ENCODE measurements at regions of chr21 and their contacts with region 1.

Region 1: DNA sequence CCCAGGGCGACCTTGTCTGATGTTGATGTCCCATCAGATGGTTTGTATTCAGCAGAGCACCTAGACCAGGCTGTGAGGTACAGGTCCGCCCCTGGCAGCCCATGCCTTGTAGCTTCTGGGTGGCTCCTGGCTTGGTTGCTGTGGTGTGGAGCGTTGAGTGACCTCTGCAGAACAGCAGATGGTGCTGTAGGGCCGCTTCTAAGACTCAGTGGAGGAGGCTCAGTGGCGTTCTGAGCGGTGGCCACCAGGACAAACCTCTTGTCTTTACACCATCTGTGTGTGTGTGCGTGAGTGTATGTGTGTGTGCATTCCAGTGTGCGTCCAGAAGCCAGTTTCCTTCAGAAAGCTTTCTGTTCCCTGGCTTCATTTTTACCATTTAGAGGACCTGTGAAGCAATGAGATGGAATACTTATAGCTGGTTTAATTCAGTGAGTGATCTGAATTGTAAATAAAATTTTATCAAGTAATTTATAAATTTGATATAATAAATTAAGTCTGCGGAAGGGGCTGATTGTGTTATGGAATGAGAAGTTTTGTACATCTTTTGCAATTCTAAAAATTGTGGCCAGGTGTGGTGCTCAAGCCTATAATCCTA is 66.1 kb downstream of the ADARB1 start:
- DNase-seq: peak; percentile 95
- ATAC-seq: peak; percentile 83
- H3K4me3 ChIP-seq: no peak overlapping the region
- H3K27ac ChIP-seq: no peak overlapping the region
- H3K4me1 ChIP-seq: peaks cover 36% of the 10 kb centered on the region
- H3K27me3 ChIP-seq: no peaks in the 10 kb centered on the region
- CTCF ChIP-seq: peak; percentile 97
- POLR2A ChIP-seq: 0 out of 2 replicates have a peak, but pooled peaks have one; percentile 28
- RAD21 ChIP-seq: peak; percentile 90

Region 2: GRCh38 chr21:44801468-44802395 is 338.7 kb before region 1 on chr21 and contains the start of gene UBE2G2:
- CTCF ChIA-PET with region 1: no interaction called
- POLR2A ChIA-PET with region 1: no interaction called
- dilution Hi-C with region 1: no loop called
- in situ Hi-C with region 1: no loop called
- intact Hi-C with region 1: loop called (anchors 10 kb)
- DNase-seq: peak; percentile 65
- ATAC-seq: peak; percentile 91
- H3K4me3 ChIP-seq: peak within 1 kb of the TSS; percentile 100
- H3K27ac ChIP-seq: peak within 1 kb of the TSS; percentile 98
- H3K4me1 ChIP-seq: peaks cover 2% of the 10 kb centered on the region; the same call in 1 of the 2 replicates
- H3K27me3 ChIP-seq: no peaks in the 10 kb centered on the region
- CTCF ChIP-seq: no peak
- POLR2A ChIP-seq: peak; percentile 39; the same call in 1 of the 2 replicates
- RAD21 ChIP-seq: no peak
- total RNA-seq, gene UBE2G2: 65.4 and 75.8 TPM in 2 replicates

Region 3: GRCh38 chr21:44892536-44893277 is 247.7 kb before region 1 on chr21:
- CTCF ChIA-PET with region 1: no interaction called
- POLR2A ChIA-PET with region 1: no interaction called
- dilution Hi-C with region 1: no loop called
- in situ Hi-C with region 1: no loop called
- intact Hi-C with region 1: loop called (anchors 5 kb)
- DNase-seq: peak; percentile 19
- ATAC-seq: peak; percentile 85
- H3K4me3 ChIP-seq: no peak overlapping the region
- H3K27ac ChIP-seq: no peak overlapping the region
- H3K4me1 ChIP-seq: no peaks in the 10 kb centered on the region
- H3K27me3 ChIP-seq: peaks cover 69% of the 10 kb centered on the region
- CTCF ChIP-seq: peak; percentile 73
- POLR2A ChIP-seq: no peak
- RAD21 ChIP-seq: peak; percentile 56

Region 4: GRCh38 chr21:44962403-44962966 is 178.0 kb before region 1 on chr21:
- CTCF ChIA-PET with region 1: interaction called, 8 read pairs
- POLR2A ChIA-PET with region 1: no interaction called
- dilution Hi-C with region 1: no loop called
- in situ Hi-C with region 1: no loop called
- intact Hi-C with region 1: loop called (anchors 5 kb)
- DNase-seq: peak; percentile 100
- ATAC-seq: peak; percentile 91
- H3K4me3 ChIP-seq: no peak overlapping the region
- H3K27ac ChIP-seq: peak overlapping the region; percentile 81
- H3K4me1 ChIP-seq: peaks cover 24% of the 10 kb centered on the region
- H3K27me3 ChIP-seq: no peaks in the 10 kb centered on the region
- CTCF ChIP-seq: no peak
- POLR2A ChIP-seq: peak; percentile 65
- RAD21 ChIP-seq: no peak; the same call in 1 of the 2 replicates

Region 5: GRCh38 chr21:45228171-45228641 is 87.8 kb after region 1 on chr21:
- CTCF ChIA-PET with region 1: interaction called, 5 read pairs
- POLR2A ChIA-PET with region 1: no interaction called
- dilution Hi-C with region 1: no loop called
- in situ Hi-C with region 1: no loop called
- intact Hi-C with region 1: loop called (anchors 5 kb)
- DNase-seq: peak; percentile 99
- ATAC-seq: peak; percentile 88
- H3K4me3 ChIP-seq: no peak overlapping the region
- H3K27ac ChIP-seq: 0 out of 2 replicates have a peak overlapping the region, but pooled peaks have one; percentile 2
- H3K4me1 ChIP-seq: peaks cover 23% of the 10 kb centered on the region
- H3K27me3 ChIP-seq: no peaks in the 10 kb centered on the region
- CTCF ChIP-seq: no peak
- POLR2A ChIP-seq: no peak
- RAD21 ChIP-seq: no peak

Region 6: DNA sequence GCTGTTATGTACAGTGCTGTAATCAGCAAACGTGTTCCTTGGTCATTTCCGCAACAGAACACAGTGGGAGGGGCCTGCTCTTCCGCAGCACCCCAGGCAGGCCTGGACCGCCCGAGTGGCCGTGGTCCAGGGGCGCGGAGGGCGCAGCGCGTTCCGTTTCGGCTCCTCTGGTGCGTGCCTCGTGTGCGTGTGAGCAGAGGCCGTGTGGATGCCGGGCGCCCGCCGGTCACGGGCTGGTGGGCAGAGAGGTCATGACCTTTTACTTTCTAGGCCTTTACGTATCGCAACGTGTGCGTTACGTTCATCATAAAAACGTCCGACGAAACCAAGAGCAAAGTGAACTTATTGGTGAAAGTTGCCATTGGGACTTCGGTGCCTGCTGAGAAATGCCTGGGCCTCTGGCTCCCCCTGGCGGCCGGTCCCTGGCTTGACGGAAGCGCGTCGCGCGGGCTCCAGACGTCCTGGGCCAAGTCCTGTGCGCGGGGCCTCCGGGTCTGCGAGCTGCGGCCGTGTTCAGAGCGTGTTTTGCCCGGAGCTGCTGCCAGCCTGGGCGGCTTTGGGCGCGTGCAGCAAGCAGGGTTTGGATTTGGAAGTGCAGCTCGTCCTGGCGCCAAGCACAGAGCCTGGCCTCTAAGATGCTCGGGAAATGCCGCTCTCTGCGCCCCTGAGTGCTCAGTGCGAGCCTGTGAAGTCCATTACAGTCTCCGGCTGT is 298.9 kb after region 1 on chr21:
- CTCF ChIA-PET with region 1: interaction called, 5 read pairs
- POLR2A ChIA-PET with region 1: no interaction called
- dilution Hi-C with region 1: no loop called
- in situ Hi-C with region 1: loop called (anchors 10 kb)
- intact Hi-C with region 1: loop called (anchors 1 kb)
- DNase-seq: peak; percentile 89
- ATAC-seq: peak; percentile 92
- H3K4me3 ChIP-seq: peak overlapping the region; percentile 10; the same call in 1 of the 2 replicates
- H3K27ac ChIP-seq: peak overlapping the region; percentile 83
- H3K4me1 ChIP-seq: peaks cover 10% of the 10 kb centered on the region
- H3K27me3 ChIP-seq: no peaks in the 10 kb centered on the region
- CTCF ChIP-seq: peak; percentile 98
- POLR2A ChIP-seq: peak; percentile 68
- RAD21 ChIP-seq: peak; percentile 99